Aorta (tissue), 5 donors: ENCODE measurements at regions of chr15 and their contacts with region 1.

Region 1: GRCh38 chr15:35519541-35520149 is 26.3 kb downstream of the DPH6 start:
- DNase-seq: no peak
- ATAC-seq: peak; percentile 81
- H3K4me3 ChIP-seq: no peak overlapping the region
- H3K27ac ChIP-seq: no peak overlapping the region
- H3K4me1 ChIP-seq: no peaks in the 10 kb centered on the region
- H3K27me3 ChIP-seq: no peaks in the 10 kb centered on the region

Region 2: GRCh38 chr15:35306361-35306981 is 213.2 kb before region 1 on chr15:
- intact Hi-C with region 1: loop called in 1 of 2 experiments (anchors 10 kb)
- DNase-seq: no peak
- ATAC-seq: peak; percentile 72
- H3K4me3 ChIP-seq: no peak overlapping the region
- H3K27ac ChIP-seq: peak overlapping the region; percentile 93 to 96
- H3K4me1 ChIP-seq: peaks cover 2 to 4% of the 10 kb centered on the region in 2 donors
- H3K27me3 ChIP-seq: no peaks in the 10 kb centered on the region

Region 3: DNA sequence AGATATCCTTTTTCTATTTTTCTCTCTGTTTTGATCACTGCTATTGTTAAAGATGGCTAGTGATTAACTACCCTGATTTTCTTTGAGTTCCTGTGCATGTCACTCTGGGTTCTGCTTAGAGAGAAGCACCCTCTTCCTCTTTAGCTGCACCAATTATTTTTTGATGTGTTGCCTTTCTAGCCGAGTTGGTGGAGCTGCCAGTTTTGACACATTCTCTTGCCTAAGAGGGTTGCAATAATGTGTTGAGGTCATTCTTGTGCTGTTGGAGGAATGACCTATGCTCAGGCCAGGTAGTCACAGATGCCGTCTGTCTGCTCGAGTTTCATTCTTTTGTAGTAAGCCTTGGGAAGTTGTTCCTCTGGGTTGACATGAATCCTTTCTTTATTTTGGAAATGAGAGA is 110.9 kb after region 1 on chr15:
- intact Hi-C with region 1: no loop called
- DNase-seq: no peak
- ATAC-seq: peak; percentile 48
- H3K4me3 ChIP-seq: no peak overlapping the region
- H3K27ac ChIP-seq: no peak overlapping the region
- H3K4me1 ChIP-seq: peaks cover 0 to 3% of the 10 kb centered on the region in 2 donors
- H3K27me3 ChIP-seq: no peaks in the 10 kb centered on the region

Region 4: DNA sequence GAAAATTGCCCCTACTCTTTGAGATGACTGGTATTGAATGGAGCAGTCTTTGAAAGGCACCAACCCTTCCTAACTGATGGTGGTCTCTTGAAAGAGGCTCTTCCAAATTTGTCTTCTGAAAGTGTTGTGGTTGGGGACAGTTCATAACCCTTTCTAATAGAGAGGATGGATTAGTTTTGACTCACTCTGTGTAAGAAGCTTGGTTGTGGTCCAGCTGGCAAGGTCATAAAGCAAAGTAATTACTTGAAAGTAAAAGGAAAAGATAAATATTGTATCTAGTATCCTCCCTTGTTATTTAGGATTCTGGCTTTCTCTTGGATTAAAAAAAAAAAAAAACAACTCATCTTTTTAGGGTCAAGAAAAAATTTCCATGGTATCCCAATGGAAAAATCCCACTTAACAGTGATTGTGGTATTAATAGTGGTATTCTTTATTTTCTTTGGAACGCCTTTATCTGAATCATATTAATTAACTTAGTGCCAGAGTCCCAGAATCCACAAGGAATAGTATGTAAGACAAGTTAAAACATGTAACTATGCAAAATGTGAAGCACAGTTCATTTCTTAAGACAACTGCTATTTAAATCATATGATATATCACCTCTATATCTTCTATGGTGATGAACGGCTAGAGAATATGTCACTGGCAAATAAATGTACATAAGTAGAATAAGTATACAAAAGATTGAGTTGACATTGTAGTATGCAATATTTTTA is 590.5 kb after region 1 on chr15:
- intact Hi-C with region 1: loop called in 1 of 2 experiments (anchors 10 kb)
- DNase-seq: peak in 1 of 2 donors; percentile 62
- ATAC-seq: peak; percentile 11
- H3K4me3 ChIP-seq: no peak overlapping the region
- H3K27ac ChIP-seq: no peak overlapping the region
- H3K4me1 ChIP-seq: peaks cover 2 to 17% of the 10 kb centered on the region in 2 donors
- H3K27me3 ChIP-seq: no peaks in the 10 kb centered on the region

Region 5: DNA sequence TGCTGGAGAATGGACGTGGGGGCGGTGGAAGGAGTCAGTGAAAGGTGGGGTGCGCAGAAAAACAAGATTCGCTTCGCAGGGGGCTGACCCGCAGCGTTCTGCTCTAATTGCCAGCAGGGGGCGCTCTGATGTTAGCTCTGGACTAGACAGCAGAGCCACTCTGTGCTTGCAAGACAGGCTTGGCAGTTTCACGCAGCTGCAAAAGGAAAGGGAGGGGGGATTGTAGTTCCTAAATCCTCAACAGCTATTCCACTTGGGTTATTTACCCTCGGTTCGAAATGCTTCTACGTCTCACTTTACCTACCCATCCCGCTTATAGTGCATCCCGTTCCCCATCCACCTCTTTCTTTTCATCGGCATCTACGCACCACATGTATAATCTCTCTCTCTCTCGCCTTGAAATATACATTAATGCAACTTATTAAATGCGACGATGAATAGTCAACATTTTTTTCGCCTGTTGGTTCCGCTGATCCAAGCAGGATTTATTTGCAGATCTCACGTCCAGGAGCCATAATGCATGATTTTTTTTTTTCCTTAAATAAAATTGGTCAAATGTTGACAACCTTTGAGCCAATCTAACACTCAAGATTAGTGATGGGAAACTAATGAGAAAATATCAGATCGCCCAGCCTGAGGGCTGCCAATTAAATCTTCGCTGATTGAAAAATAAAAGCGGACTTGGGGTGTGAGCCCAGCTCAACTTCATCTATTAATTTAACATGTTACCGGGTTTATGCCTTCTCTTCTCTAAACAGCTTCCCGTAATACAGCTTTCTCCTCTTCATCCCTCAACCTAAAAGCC is 1364.3 kb after region 1 on chr15:
- intact Hi-C with region 1: loop called in 1 of 2 experiments (anchors 10 kb)
- DNase-seq: peak; percentile 90 to 94
- ATAC-seq: peak; percentile 90
- H3K4me3 ChIP-seq: peak overlapping the region; percentile 44 to 51
- H3K27ac ChIP-seq: no peak overlapping the region
- H3K4me1 ChIP-seq: no peaks in the 10 kb centered on the region
- H3K27me3 ChIP-seq: no peaks in the 10 kb centered on the region